ENCODE measurements at regions of chr4 and their contacts with region 1.

Region 1: DNA sequence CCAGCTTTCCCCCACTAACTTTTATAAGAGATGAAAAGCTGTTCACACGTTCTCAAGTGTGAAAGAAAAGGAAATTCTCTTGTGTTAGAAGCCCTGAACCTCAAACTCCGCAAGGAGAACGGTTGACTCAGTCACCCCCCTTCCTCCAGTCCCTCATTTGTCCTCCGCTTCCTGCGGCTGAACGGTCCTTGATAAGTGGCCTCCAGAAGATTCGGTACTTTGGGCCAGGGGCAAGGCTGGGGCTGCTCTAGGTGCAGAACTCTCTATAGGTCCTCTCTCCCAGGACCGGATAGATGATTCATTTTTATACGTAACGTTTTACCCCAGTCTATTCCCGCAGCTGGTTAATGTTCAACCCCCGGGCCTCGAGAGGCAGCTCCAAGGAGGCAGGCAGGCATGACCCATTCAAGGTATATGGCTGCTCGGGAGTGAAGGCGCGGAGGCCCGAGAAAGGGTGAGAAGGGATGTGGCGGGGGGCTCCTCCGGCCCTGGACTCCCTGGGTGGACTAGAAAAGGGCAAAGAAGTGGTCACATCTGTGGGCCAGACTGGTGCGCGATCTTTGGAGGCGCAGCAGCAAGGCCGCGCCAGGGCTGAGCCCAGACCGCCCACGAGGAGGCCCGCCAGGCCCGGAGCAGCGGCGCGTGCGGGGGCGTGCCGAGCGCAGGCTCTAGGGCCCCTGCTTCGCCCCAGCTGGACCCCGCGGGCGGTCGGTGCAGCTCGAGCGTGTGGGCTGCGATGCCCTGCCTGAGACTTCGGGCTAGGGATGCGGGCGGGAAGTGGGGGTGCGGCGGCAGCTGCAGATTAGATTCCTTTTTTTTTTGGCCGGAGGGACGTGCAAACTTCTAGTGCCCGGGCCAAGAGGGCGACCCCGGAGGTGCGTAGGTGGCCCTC is 11.7 kb downstream of the PITX2 start:
- DNase-seq: peak; percentile 53
- H3K4me3 Mint-ChIP-seq: no peak overlapping the region
- H3K27ac Mint-ChIP-seq: no peak overlapping the region
- H3K4me1 Mint-ChIP-seq: no peaks in the 10 kb centered on the region
- H3K27me3 Mint-ChIP-seq: peaks cover 70% of the 10 kb centered on the region

Region 2: DNA sequence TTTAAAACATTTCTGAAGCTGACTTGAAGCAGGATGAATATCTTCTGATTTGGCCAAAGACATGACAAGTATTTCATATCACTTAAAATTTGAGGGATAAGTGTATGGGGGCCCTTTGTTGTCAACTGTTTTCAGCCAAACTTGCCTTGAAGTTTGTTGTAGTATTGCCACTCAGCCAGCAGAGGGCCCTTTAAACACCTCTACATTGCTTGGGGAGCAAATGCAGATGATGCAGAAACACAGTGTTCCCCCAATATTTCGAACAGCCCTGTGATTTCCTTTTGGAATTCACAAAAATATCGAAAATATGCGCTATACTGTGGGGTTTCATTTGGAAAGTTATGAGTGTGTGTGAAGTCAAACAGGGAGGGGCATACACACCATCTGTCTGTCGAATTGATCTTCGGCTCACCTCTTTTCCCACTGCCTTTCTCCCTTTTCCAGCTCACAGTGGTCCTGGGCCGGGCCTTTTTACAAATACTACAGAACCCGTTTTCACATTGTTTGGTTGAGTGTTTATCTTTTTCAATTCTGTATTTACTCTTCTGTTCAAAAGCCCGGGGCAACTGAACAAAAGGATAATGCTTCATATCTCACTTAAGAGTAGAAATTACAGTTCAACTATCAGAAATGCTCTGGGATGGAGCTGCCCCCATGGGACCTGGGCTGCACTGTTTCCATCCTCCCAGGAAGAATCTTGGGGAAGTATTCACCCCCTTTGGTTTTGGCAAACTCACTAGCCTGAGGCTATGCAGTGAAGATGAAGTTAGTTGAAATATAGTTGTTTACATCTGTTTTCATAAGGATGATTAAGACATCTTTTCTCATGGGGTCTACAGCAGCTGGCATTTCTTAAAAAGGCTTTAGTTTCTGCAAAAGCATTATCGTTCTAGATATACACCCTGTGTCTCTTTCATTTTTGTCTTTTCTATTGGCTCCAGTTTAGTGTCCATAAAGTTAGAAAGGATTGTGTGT is 560.9 kb before region 1 on chr4:
- intact Hi-C with region 1: no loop called
- DNase-seq: peak; percentile 86
- H3K4me3 Mint-ChIP-seq: no peak overlapping the region
- H3K27ac Mint-ChIP-seq: no peak overlapping the region
- H3K4me1 Mint-ChIP-seq: peaks cover 31% of the 10 kb centered on the region
- H3K27me3 Mint-ChIP-seq: no peaks in the 10 kb centered on the region

Region 3: GRCh38 chr4:110622841-110623717 is 11.9 kb after region 1 on chr4 and contains the start of gene PITX2:
- intact Hi-C with region 1: loop called (anchors 1 kb)
- DNase-seq: peak; percentile 78
- H3K4me3 Mint-ChIP-seq: peak within 1 kb of the TSS; percentile 67
- H3K27ac Mint-ChIP-seq: peak within 1 kb of the TSS; percentile 53
- H3K4me1 Mint-ChIP-seq: peaks cover 3% of the 10 kb centered on the region
- H3K27me3 Mint-ChIP-seq: peaks cover 93% of the 10 kb centered on the region
- total RNA-seq, gene PITX2: 0.09 TPM in 1 of 2 replicates, not detected in the other